ENCODE measurements at regions of chr1 and their contacts with region 1.

Region 1: GRCh38 chr1:160085686-160086455 is 4.5 kb downstream of the KCNJ9 start:
- DNase-seq: peak; percentile 88
- H3K4me3 Mint-ChIP-seq: no peak overlapping the region
- H3K27ac Mint-ChIP-seq: no peak overlapping the region
- H3K4me1 Mint-ChIP-seq: peaks cover 5% of the 10 kb centered on the region
- H3K27me3 Mint-ChIP-seq: peaks cover 17% of the 10 kb centered on the region

Region 2: GRCh38 chr1:159936273-159936904 is 149.5 kb before region 1 on chr1:
- CTCF ChIA-PET with region 1: interaction called, 3 read pairs
- intact Hi-C with region 1: loop called (anchors 2 kb)
- DNase-seq: peak; percentile 89
- H3K4me3 Mint-ChIP-seq: no peak overlapping the region
- H3K27ac Mint-ChIP-seq: no peak overlapping the region
- H3K4me1 Mint-ChIP-seq: no peaks in the 10 kb centered on the region
- H3K27me3 Mint-ChIP-seq: no peaks in the 10 kb centered on the region

Region 3: DNA sequence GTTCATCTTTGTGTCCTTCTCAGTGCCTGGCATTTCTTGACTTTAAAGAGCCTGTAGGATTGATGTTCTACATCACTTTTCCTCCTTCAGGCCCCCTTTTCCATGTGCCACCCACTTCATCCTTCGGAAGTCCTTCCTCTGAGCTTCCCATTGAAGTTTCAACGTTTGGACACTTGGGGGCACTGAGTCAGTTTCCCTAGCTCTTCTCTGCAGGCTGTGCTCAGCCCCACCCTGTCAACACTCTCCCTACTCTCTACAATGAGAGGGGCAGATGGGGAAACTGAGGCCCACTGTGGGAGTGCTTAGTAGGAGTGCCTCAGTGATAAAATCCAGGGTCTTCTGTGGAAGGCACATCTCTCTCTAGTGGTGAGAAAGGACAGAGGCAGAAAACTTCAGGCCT is 27.8 kb before region 1 on chr1:
- CTCF ChIA-PET with region 1: interaction called, 565 read pairs
- intact Hi-C with region 1: loop called (anchors 2 kb)
- DNase-seq: no peak
- H3K4me3 Mint-ChIP-seq: no peak overlapping the region
- H3K27ac Mint-ChIP-seq: no peak overlapping the region
- H3K4me1 Mint-ChIP-seq: no peaks in the 10 kb centered on the region
- H3K27me3 Mint-ChIP-seq: peaks cover 6% of the 10 kb centered on the region

Region 4: DNA sequence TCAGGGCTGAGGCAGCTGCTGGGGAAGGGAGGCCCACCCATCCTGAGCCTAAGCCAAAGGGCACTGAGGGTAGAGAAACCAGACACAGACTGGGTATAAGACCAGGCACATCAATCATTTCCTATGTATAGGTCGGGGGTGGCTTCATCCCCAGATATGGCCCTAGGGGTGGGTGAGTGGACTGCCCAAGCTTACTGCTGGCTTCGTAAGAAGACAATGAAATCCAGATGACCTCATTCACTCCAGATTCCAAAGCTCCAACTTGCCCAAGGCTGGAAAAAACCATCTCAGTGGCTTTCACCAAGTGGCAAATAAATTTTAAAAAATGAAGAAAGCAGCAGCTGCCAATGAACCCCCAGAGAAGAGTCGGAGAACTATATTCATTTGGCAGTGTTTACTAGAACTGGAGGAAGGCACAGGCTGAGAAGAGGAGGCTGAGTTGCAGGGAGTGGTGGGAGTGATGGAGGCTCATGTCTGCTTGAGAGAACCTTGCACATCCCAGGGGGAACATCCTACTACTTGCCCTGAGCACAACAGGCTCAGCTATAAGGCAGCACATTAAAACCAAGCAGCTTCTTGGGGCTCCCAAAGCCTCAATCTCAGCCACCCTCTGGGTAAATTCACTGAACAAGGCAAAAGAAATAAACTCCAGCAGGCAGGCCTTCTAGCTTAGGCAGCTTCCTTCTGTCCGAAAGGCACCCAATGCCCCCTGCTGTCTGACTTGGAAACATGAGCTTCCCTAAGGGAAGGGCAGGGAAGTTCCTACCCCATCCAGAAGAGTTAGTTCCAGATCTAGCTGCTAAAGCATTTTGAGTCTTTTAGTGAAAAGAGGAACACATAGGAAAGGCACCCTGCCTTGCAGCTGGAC is 133.4 kb after region 1 on chr1:
- CTCF ChIA-PET with region 1: no interaction called
- intact Hi-C with region 1: no loop called
- DNase-seq: no peak
- H3K4me3 Mint-ChIP-seq: no peak overlapping the region
- H3K27ac Mint-ChIP-seq: no peak overlapping the region
- H3K4me1 Mint-ChIP-seq: no peaks in the 10 kb centered on the region
- H3K27me3 Mint-ChIP-seq: no peaks in the 10 kb centered on the region